ENCODE measurements at regions of chrX and their contacts with region 1.

Region 1: DNA sequence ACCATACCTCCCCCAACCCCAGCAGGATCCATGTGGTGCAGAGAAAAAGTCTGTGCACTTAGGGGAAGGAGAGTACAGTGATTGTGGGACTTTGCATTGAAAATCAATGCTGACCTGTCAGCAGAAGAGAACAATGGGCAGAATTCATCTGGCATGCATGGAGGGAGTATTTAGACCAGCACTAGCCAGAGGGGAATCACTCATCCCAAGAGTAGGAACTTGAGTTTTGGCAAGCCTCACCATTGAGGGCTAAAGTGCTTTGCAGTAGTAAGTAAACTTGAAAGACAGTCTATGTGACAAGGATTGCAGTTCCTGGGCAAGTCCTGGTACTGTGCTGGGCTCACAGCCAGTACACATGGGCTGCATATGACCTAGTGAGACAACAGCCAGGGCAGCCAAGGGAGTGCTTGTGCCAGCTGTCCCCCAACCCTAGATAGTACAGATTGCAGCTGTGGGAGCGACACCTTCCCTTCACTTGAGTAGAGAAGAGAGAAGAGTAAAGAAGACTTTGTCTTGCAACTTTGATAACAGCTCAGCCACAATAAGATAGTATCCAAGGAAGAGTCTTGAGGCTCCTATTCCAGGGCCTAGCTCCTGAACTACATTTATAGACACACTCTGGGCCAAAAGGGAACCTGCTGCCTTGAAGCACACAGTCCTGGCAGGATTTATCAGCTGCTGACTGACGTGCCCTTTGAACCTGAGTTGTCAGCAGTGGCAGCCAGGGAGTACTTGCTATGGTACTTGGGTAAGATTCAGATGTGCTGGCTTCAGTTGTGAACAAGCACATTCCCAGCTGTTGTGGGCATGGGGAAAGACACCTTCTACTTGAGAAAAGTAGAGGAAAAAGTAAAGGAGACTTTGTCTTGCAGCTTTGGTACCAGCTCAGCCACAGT is 48.7 kb downstream of the HDX start:
- DNase-seq: no peak
- H3K4me3 ChIP-seq: no peak overlapping the region
- H3K27ac ChIP-seq: no peak overlapping the region
- H3K4me1 ChIP-seq: no peaks in the 10 kb centered on the region
- H3K27me3 ChIP-seq: no peaks in the 10 kb centered on the region
- CTCF ChIP-seq: no peak
- EP300 ChIP-seq: no peak
- POLR2A ChIP-seq: no peak

Region 2: GRCh38 chrX:84710611-84711010 is 257.0 kb after region 1 on chrX:
- intact Hi-C with region 1: loop called in 1 of 4 experiments (anchors 10 kb)
- DNase-seq: no peak
- H3K4me3 ChIP-seq: no peak overlapping the region
- H3K27ac ChIP-seq: no peak overlapping the region
- H3K4me1 ChIP-seq: no peaks in the 10 kb centered on the region
- H3K27me3 ChIP-seq: no peaks in the 10 kb centered on the region
- CTCF ChIP-seq: no peak
- EP300 ChIP-seq: no peak
- POLR2A ChIP-seq: no peak